Endothelial cell of umbilical vein (primary cell): ENCODE measurements at regions of chr6 and their contacts with region 1.

Region 1: GRCh38 chr6:43769526-43770416 is at the start of gene VEGFA:
- DNase-seq: peak; percentile 86
- H3K4me3 ChIP-seq: peak within 1 kb of the TSS; percentile 75 to 86 (median 81)
- H3K27ac ChIP-seq: peak within 1 kb of the TSS; percentile 71
- H3K4me1 ChIP-seq: peaks cover 18% of the 10 kb centered on the region
- H3K27me3 ChIP-seq: no peaks in the 10 kb centered on the region
- CTCF ChIP-seq: peak; percentile 96 to 98
- POLR2A ChIP-seq: peak; percentile 33
- total RNA-seq, gene VEGFA: 16.6 and 18.1 TPM in 2 replicates

Region 2: DNA sequence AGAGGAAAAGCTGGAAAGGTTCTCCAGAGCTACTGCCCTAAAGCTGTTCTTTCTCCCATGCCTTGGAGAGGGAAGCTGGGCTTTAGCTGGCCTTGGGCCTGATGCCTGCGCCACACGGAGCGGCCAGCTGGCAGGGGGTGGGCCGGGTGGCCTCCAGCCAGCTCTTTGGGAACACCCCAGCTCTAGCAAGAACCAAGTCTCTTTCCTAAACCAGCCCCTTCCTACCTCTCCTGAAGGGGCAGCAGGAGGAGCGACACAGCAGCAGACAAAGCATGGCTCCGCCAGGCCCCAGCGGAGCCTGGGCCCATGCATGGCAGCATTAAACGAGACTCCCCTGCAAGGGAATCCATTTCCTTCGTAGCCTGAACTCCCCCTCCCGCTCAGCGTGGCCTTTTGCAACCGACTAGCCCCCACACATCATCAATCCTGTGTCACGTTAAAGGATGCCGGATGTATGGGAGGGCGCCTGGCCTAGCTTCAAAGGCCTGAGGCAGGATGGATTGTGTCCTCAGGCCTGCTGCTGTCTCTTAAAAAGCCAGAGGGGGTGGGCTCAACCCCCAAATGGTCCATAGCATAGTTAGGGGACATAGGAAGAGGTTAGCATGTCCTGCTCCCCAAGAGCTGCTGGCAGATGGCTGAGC is 96.2 kb before region 1 on chr6:
- CTCF ChIA-PET with region 1: interaction called, 90 read pairs
- POLR2A ChIA-PET with region 1: interaction called, 3 read pairs
- dilution Hi-C with region 1: no loop called
- intact Hi-C with region 1: no loop called
- DNase-seq: no peak
- H3K4me3 ChIP-seq: no peak overlapping the region
- H3K27ac ChIP-seq: no peak overlapping the region
- H3K4me1 ChIP-seq: peaks cover 3% of the 10 kb centered on the region
- H3K27me3 ChIP-seq: no peaks in the 10 kb centered on the region
- CTCF ChIP-seq: no peak
- POLR2A ChIP-seq: no peak

Region 3: DNA sequence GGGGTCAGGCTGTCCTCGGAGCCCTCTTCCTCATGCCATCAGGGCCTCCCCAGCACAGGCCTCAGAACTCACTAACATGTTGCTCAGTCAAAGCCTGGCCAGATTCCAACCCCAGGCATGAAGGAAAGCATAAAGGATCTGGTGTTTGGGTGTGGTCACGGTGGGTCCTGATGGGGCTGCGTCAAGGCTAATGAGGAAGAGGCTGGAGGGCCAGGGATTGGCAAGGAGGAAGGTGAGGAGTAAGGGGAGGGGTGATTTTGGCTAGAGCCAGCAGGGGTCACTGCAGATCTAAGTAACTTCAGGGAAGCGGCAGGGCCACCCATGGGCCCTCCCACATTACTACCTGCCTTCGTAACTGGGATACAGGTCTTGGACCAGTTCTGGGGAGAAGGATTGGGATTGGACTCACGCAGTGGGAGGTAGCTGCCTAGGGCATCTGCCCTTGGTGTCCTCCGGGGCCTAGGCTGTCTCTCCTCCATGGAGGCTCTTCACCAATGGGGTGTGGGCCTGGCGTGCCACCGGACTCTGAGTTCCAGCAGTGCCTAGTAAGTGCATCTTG is 46.0 kb before region 1 on chr6:
- CTCF ChIA-PET with region 1: interaction called, 12 read pairs
- POLR2A ChIA-PET with region 1: no interaction called
- dilution Hi-C with region 1: no loop called
- intact Hi-C with region 1: loop called (anchors 1 kb)
- DNase-seq: peak; percentile 56
- H3K4me3 ChIP-seq: no peak overlapping the region
- H3K27ac ChIP-seq: no peak overlapping the region
- H3K4me1 ChIP-seq: no peaks in the 10 kb centered on the region
- H3K27me3 ChIP-seq: no peaks in the 10 kb centered on the region
- CTCF ChIP-seq: peak; percentile 61 to 73
- POLR2A ChIP-seq: no peak

Region 4: GRCh38 chr6:43838276-43839036 is 68.7 kb after region 1 on chr6:
- CTCF ChIA-PET with region 1: no interaction called
- POLR2A ChIA-PET with region 1: no interaction called
- dilution Hi-C with region 1: no loop called
- intact Hi-C with region 1: loop called (anchors 2 kb)
- DNase-seq: peak; percentile 31
- H3K4me3 ChIP-seq: no peak overlapping the region
- H3K27ac ChIP-seq: no peak overlapping the region
- H3K4me1 ChIP-seq: no peaks in the 10 kb centered on the region
- H3K27me3 ChIP-seq: peaks cover 4 to 10% of the 10 kb centered on the region in 2 experiments
- CTCF ChIP-seq: peak; percentile 28 to 58
- POLR2A ChIP-seq: no peak

Region 5: GRCh38 chr6:44058617-44059358 is 289.0 kb after region 1 on chr6:
- CTCF ChIA-PET with region 1: interaction called, 8 read pairs
- POLR2A ChIA-PET with region 1: no interaction called
- dilution Hi-C with region 1: no loop called
- intact Hi-C with region 1: loop called (anchors 5 kb)
- DNase-seq: peak; percentile 95
- H3K4me3 ChIP-seq: no peak overlapping the region
- H3K27ac ChIP-seq: peak overlapping the region; percentile 93
- H3K4me1 ChIP-seq: peaks cover 39% of the 10 kb centered on the region
- H3K27me3 ChIP-seq: no peaks in the 10 kb centered on the region
- CTCF ChIP-seq: no peak
- POLR2A ChIP-seq: no peak